ENCODE measurements at regions of chr9 and their contacts with region 1.

Region 1: DNA sequence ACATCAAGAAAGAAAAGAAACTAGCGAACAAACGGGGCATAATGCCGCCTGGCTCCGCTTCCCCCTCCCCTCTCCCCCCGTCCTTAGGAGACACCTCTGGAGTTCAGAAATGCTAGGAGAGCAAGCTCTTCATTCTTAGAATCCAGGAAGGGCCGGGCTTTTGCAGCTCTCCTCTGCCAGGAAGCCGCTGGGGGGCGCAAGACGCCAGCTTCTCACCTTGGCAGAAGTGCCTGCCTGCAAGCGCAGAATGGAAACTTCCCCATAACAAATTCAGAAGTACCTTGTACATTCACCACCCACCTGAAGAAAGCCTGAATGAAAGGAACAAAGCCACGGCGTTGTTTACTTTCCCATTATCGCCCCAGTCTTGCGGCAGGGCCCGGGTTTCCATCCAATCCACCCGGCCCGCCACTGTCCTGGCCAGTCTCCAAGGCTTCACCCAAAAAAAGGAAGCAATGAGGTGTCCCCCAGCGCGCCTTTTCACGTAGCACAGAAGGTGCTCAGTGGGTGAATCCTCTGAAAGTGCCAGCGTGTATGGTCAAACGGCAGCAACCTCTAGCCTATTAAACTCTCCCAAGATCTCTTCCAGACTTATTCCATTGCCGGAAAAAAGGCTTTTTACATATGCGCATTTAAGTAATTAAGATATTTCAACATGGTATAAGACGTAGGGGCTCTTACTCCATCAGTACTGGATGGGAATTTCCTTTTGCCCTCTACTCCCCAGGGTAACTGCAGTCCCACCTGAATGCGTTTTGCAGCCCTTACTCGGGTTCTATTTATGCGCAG is 1.6 kb upstream of the GADD45G start:
- DNase-seq: peak; percentile 84
- H3K4me3 ChIP-seq: peak overlapping the region; percentile 45
- H3K27ac ChIP-seq: no peak overlapping the region
- H3K4me1 ChIP-seq: peaks cover 32% of the 10 kb centered on the region
- H3K27me3 ChIP-seq: peaks cover 43% of the 10 kb centered on the region
- CTCF ChIP-seq: peak; percentile 95

Region 2: GRCh38 chr9:89621697-89622096 is 18.5 kb after region 1 on chr9:
- CTCF ChIA-PET with region 1: no interaction called
- POLR2A ChIA-PET with region 1: no interaction called
- intact Hi-C with region 1: no loop called
- DNase-seq: no peak
- H3K4me3 ChIP-seq: no peak overlapping the region
- H3K27ac ChIP-seq: no peak overlapping the region
- H3K4me1 ChIP-seq: no peaks in the 10 kb centered on the region
- H3K27me3 ChIP-seq: no peaks in the 10 kb centered on the region
- CTCF ChIP-seq: no peak

Region 3: DNA sequence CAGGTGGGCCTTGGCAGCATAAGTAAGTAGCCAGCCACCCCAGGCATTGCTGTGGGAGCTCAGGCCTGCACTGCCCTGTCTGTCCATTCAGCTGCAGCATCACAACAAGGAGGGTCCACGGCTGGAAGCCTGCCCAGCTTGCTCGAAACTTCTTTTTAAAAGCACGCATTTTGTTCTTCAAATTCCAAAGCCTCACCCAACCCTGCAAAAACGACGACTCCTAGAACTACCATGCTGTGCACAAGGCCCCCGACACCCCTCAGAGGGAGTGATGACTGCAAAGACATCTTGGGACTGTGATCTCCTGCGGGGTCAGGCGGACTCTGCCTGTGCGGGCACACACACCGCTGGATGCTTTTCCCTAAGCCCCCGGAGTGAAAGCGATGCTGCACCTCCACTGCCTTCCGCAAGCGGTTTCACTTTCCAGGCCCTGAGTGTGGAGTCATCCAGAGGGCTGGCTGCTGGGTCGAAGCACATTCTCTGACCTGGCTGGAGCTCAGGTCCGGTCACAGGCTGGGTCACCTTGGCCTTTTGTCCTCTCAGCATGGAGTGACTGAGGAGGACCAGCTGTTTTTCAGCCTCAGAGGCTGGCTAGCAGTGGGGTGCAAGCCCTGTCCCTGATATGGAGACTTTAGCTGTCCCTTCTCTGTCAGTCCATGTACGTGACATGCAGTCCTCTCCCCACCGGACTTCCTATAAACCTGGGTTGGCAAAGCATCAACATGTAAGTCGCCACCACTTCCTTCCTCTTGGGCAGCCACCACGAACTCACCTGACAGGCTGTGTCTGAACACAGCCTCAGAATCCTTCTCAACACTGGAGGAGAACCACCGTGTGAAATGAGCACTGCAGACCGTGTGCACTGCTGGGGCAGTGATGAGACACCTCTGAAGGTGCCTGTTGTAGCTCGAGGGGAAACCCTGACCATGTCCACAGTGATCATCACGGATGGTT is 52.8 kb after region 1 on chr9:
- CTCF ChIA-PET with region 1: interaction called, 10 read pairs
- POLR2A ChIA-PET with region 1: no interaction called
- intact Hi-C with region 1: no loop called
- DNase-seq: no peak
- H3K4me3 ChIP-seq: no peak overlapping the region
- H3K27ac ChIP-seq: no peak overlapping the region
- H3K4me1 ChIP-seq: no peaks in the 10 kb centered on the region
- H3K27me3 ChIP-seq: no peaks in the 10 kb centered on the region
- CTCF ChIP-seq: no peak

Region 4: DNA sequence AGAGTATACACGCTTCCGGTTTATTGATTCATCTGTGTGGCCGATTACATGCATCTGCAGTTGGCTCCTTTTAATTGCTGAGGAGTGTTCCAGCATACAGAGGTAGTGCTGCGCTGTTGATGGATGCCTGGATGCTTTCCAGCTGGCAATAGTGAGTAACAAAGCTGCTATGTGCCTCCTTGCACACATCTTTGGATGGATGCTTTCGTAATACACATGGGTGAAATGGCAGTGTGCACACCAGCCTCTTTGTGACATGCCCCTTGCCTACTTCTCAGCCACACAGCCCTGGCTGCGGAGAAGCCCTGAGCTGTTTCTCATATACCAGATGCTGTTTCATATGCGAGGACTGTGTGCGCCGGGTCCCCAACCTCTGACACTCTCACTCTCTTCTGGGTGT is 152.6 kb after region 1 on chr9:
- CTCF ChIA-PET with region 1: no interaction called
- POLR2A ChIA-PET with region 1: no interaction called
- intact Hi-C with region 1: no loop called
- DNase-seq: peak; percentile 10
- H3K4me3 ChIP-seq: no peak overlapping the region
- H3K27ac ChIP-seq: no peak overlapping the region
- H3K4me1 ChIP-seq: no peaks in the 10 kb centered on the region
- H3K27me3 ChIP-seq: no peaks in the 10 kb centered on the region
- CTCF ChIP-seq: no peak

Region 5: GRCh38 chr9:89781838-89782517 is 178.8 kb after region 1 on chr9:
- CTCF ChIA-PET with region 1: interaction called, 4 read pairs
- POLR2A ChIA-PET with region 1: no interaction called
- intact Hi-C with region 1: loop called (anchors 10 kb)
- DNase-seq: no peak
- H3K4me3 ChIP-seq: no peak overlapping the region
- H3K27ac ChIP-seq: no peak overlapping the region
- H3K4me1 ChIP-seq: no peaks in the 10 kb centered on the region
- H3K27me3 ChIP-seq: no peaks in the 10 kb centered on the region
- CTCF ChIP-seq: no peak

Region 6: DNA sequence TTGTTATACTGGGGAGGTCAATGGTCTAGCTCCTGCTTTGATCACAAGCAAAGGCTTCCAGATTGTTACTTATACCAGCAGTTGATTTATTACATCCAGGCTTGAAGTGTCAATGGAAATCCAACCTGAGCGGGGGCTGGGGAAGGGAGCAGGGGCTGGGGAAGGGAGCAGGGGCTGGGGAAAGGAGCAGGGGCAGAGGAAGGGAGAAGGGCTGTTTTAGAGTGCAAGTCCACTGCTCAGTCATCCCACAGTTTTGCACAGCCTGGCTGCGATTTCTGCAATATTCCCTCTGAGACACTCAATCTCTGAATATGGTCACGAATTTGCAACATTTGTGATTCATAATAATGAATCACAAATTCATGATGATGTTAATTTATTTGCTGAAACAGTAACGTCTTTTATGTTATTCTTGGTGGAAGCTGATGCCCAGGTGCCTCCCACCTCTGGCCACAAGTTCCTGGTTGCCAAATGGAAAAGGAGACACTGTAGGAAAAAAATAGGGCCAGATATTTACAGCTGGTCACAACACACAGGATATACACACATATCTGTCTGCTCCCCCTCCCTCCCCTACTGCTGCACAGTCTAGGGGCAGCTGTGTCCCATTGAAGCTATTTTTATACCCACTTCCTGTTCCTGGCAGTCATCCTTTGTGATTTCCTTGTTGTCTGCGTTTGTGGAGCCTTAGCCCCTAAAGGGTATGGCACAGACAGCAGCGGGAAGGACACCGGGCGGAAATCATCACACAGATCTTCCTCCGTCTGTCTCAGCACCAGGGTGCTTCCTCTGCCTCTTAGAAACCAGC is 326.7 kb after region 1 on chr9:
- CTCF ChIA-PET with region 1: no interaction called
- POLR2A ChIA-PET with region 1: no interaction called
- intact Hi-C with region 1: loop called (anchors 10 kb)
- DNase-seq: peak; percentile 62
- H3K4me3 ChIP-seq: no peak overlapping the region
- H3K27ac ChIP-seq: no peak overlapping the region
- H3K4me1 ChIP-seq: no peaks in the 10 kb centered on the region
- H3K27me3 ChIP-seq: no peaks in the 10 kb centered on the region
- CTCF ChIP-seq: no peak

Region 7: DNA sequence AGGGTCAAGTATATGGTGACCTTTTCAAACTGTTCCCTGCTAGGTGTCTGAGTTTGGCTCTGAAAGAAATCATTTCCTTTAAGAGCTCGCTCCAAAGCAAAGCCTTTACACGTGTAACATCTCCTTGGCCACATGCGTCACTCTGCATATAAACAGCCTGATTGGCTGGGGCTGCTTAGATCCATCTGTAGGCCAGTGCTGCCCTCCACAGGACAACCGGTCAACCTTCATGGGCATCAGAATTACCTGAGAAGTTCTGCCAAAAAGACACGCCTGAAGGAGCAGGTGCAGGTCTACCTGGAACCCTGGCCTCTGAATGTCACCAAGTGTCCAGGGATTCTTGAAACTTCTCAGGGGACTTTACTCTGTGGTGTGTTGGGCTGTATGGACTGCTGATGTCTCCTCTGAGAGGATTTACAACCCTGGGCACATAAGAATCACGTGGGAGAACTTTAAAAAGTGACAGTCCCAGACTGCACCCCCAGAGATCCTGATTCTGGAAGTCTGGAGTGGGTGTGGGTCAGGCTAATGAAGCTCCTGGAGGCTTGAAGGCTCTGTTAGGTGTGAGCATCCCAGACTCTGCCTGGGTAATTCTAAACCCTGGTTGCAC is 499.2 kb after region 1 on chr9:
- CTCF ChIA-PET with region 1: interaction called, 33 read pairs
- POLR2A ChIA-PET with region 1: no interaction called
- intact Hi-C with region 1: loop called (anchors 1 kb)
- DNase-seq: peak; percentile 81
- H3K4me3 ChIP-seq: no peak overlapping the region
- H3K27ac ChIP-seq: no peak overlapping the region
- H3K4me1 ChIP-seq: no peaks in the 10 kb centered on the region
- H3K27me3 ChIP-seq: no peaks in the 10 kb centered on the region
- CTCF ChIP-seq: peak; percentile 78

Region 8: GRCh38 chr9:90870621-90871326 is 1267.6 kb after region 1 on chr9:
- CTCF ChIA-PET with region 1: no interaction called
- POLR2A ChIA-PET with region 1: no interaction called
- intact Hi-C with region 1: loop called (anchors 5 kb)
- DNase-seq: peak; percentile 59
- H3K4me3 ChIP-seq: no peak overlapping the region
- H3K27ac ChIP-seq: no peak overlapping the region
- H3K4me1 ChIP-seq: peaks cover 5% of the 10 kb centered on the region
- H3K27me3 ChIP-seq: no peaks in the 10 kb centered on the region
- CTCF ChIP-seq: peak; percentile 89